K562 (cell line): ENCODE measurements at regions of chr15 and their contacts with region 1.

Region 1: GRCh38 chr15:34223904-34224596 is 766 bp upstream of the EMC4 start:
- DNase-seq: peak; percentile 25 to 47 (median 25)
- ATAC-seq: peak; percentile 69
- H3K4me3 ChIP-seq: peak overlapping the region; percentile 86
- H3K27ac ChIP-seq: peak overlapping the region; percentile 97
- H3K4me1 ChIP-seq: peaks cover 0 to 8% of the 10 kb centered on the region in 2 experiments; a peak in 2 of 5 replicates
- H3K27me3 ChIP-seq: no peaks in the 10 kb centered on the region
- CTCF ChIP-seq: peak in 1 of 3 experiments; percentile 15; a peak in 2 of 6 replicates
- EP300 ChIP-seq: no peak
- POLR2A ChIP-seq: no peak; the same call in none of the 2 replicates
- RAD21 ChIP-seq: 0 out of 4 replicates have a peak, but pooled peaks of 1 of the 2 experiments have one; percentile 1

Region 2: DNA sequence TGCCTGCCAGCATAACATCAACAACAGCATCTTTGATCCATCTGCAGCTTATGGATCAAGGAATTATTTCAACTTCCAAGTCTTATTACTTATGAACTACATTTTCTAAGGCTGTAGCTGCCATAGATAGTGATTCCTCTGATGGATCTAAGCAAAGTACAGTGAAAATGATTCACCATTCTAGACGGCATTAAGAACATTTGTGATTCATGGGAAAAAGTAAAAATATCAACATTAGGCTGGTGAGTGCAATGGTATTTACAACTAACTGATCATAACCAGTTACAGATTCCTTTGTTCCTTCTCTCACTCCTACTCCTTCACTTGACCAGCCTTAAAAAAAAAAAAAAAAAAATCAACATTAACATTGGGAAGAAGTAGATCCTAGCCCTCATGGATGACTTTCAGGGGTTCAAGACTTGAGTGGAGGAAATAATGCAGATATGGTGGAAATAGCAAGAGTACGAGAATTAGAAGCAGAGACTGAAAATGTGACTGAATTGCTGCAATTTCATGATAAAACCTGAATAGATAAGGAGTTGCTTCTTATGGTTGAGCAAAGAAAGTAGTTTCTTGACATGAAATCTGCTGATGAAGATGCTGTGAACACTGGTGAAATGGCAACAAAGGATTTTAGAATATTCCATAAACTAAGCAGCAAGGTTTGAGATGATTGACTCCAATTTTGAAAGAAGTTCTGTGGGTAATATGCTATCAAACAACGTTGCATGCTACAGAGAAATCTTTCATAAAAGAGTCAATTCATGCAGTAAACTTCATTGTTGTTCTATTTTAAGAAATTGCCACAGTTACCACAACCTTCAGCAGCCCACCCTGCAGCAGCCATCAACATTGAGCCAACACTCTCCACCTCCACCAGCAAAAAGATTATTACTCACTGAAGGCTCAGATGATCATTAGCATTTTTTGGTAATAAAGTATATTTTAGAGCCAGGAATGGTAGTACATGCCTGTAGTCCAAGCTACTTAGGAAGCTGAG is 90.7 kb after region 1 on chr15:
- CTCF ChIA-PET with region 1: no interaction called
- POLR2A ChIA-PET with region 1: no interaction called
- in situ Hi-C with region 1: no loop called
- intact Hi-C with region 1: no loop called
- DNase-seq: no peak
- ATAC-seq: no peak
- H3K4me3 ChIP-seq: no peak overlapping the region
- H3K27ac ChIP-seq: no peak overlapping the region
- H3K4me1 ChIP-seq: peaks cover 0 to 4% of the 10 kb centered on the region in 2 experiments; a peak in 3 of 5 replicates
- H3K27me3 ChIP-seq: no peaks in the 10 kb centered on the region
- CTCF ChIP-seq: no peak
- EP300 ChIP-seq: no peak
- POLR2A ChIP-seq: no peak
- RAD21 ChIP-seq: no peak

Region 3: DNA sequence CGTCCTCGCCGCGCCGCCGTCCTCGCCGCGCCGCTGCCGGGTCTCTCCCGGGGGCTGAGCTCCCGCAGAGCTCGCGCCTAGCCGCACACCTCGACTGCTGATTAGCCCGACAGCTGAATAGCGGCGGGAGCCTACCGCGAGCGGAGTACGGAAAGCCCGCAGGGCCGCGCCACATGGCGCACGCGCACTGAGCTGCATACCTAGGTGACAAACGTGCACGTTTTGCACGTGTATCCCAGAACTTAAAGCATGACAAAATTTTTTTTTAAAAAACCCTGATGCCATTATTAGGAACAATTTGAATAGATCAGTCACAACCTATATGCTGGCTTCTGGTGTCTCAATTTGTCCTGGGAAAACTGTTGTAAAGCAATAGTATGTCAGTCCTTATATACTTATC is 213.6 kb after region 1 on chr15 and contains the start of gene GOLGA8A:
- CTCF ChIA-PET with region 1: no interaction called
- POLR2A ChIA-PET with region 1: no interaction called
- in situ Hi-C with region 1: no loop called
- intact Hi-C with region 1: loop called (anchors 10 kb)
- DNase-seq: peak; percentile 86 to 94 (median 88)
- ATAC-seq: peak; percentile 79
- H3K4me3 ChIP-seq: peak within 1 kb of the TSS; percentile 74
- H3K27ac ChIP-seq: peak within 1 kb of the TSS; percentile 74
- H3K4me1 ChIP-seq: peaks cover 8 to 26% of the 10 kb centered on the region in 2 experiments; a peak in 3 of 5 replicates
- H3K27me3 ChIP-seq: no peaks in the 10 kb centered on the region
- CTCF ChIP-seq: no peak; a peak in 1 of 6 replicates
- EP300 ChIP-seq: no peak
- POLR2A ChIP-seq: peak; percentile 66; the same call in 1 of the 2 replicates
- RAD21 ChIP-seq: no peak
- polyA plus RNA-seq, gene GOLGA8A: 11.2 to 12.4 TPM

Region 4: GRCh38 chr15:34616613-34617012 is 392.6 kb after region 1 on chr15:
- CTCF ChIA-PET with region 1: no interaction called
- POLR2A ChIA-PET with region 1: no interaction called
- in situ Hi-C with region 1: no loop called
- intact Hi-C with region 1: no loop called
- DNase-seq: peak; percentile 26 to 83 (median 48)
- ATAC-seq: peak; percentile 95
- H3K4me3 ChIP-seq: no peak overlapping the region
- H3K27ac ChIP-seq: no peak overlapping the region
- H3K4me1 ChIP-seq: peaks cover 0 to 20% of the 10 kb centered on the region in 2 experiments; a peak in 4 of 5 replicates
- H3K27me3 ChIP-seq: no peaks in the 10 kb centered on the region
- CTCF ChIP-seq: peak; percentile 56 to 64 (median 59)
- EP300 ChIP-seq: no peak; the same call in 1 of the 2 replicates
- POLR2A ChIP-seq: no peak
- RAD21 ChIP-seq: peak in 1 of 2 experiments; percentile 78; a peak in 3 of 4 replicates